A549 (cell line): ENCODE measurements at regions of chr11 and their contacts with region 1.

Region 1: DNA sequence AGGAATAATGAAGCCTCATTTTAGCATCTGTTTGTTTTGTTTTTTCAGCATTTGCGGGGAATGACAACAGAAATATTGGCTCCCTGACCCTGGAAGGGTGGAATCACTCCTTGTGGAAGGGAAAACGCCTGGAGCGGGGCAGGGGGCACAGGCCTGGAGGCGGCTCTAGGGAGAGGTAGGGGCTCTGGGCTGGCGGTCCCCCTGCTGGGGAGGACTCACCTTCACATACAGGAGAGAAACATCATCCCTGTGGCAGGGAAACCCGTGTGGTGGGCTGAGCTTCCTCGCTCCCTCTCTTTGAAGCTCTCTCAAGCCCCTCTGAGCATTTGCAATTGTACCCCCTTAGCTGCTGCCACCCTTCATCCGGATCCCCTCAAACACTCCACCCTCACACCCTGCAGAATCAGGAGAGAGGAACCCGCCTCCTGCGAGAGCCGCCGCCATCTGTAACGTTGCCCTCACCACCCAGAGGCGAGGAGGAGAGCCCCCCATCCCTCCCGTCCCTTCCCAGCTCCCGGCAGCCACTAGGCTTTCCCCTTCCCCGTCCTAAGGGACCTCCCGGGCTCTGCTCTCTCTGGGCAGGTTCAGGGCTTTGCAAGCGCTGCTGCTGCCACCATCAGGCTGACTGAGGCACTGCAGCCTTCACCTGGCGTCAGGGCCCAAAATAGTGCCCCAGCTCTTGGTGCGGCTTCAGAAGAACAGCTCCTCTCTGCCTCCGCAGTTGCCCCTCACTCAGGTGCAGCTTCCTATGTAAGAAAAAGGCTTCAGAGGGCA is 10.4 kb downstream of the KIRREL3 start:
- DNase-seq: peak; percentile 69 to 70
- ATAC-seq: peak; percentile 59 to 76
- H3K4me3 ChIP-seq: no peak overlapping the region
- H3K27ac ChIP-seq: peak overlapping the region; percentile 88 to 92
- H3K4me1 ChIP-seq: peaks cover 56% of the 10 kb centered on the region
- CTCF ChIP-seq: peak; percentile 71
- EP300 ChIP-seq: no peak
- POLR2A ChIP-seq: no peak
- RAD21 ChIP-seq: peak; percentile 90 to 91

Region 2: DNA sequence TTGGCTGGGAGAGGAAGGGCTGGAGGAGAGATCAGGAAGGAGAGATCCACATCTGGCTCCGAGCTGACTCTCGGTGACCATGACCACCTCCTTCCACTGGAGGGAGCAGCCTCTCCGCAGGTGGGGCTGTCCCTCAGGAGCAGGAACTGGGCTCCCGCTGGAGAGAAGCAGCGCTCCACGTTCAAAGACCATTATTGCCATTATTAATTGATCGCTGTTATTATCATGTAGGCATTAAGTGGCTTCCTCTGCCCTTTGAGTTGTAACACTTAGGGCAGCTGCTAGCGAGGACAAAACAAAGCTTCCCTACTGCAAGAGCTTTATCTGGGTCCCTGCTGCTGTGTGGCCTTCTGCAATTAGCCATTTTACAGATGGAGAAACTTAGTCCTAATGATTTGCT is 382.8 kb before region 1 on chr11:
- CTCF ChIA-PET with region 1: interaction called, 78 read pairs
- POLR2A ChIA-PET with region 1: no interaction called
- DNase-seq: peak; percentile 44 to 59
- ATAC-seq: peak; percentile 98
- H3K4me3 ChIP-seq: no peak overlapping the region
- H3K27ac ChIP-seq: peak overlapping the region in 1 of 2 experiments; percentile 52; a peak in 2 of 6 replicates
- H3K4me1 ChIP-seq: 0 out of 3 replicates have a peak, but pooled peaks cover 4% of the 10 kb centered on the region
- CTCF ChIP-seq: peak; percentile 72
- EP300 ChIP-seq: no peak
- POLR2A ChIP-seq: no peak
- RAD21 ChIP-seq: peak; percentile 84 to 88

Region 3: GRCh38 chr11:126716456-126717083 is 273.6 kb before region 1 on chr11:
- CTCF ChIA-PET with region 1: interaction called, 21 read pairs
- POLR2A ChIA-PET with region 1: no interaction called
- DNase-seq: peak; percentile 21 to 40
- ATAC-seq: peak; percentile 49 to 81; a peak in 3 of 6 replicates
- H3K4me3 ChIP-seq: no peak overlapping the region
- H3K27ac ChIP-seq: no peak overlapping the region
- H3K4me1 ChIP-seq: peaks cover 34% of the 10 kb centered on the region
- CTCF ChIP-seq: peak; percentile 42
- EP300 ChIP-seq: no peak
- POLR2A ChIP-seq: no peak
- RAD21 ChIP-seq: peak; percentile 55 to 67

Region 4: GRCh38 chr11:126973060-126973459 is 17.1 kb before region 1 on chr11:
- CTCF ChIA-PET with region 1: interaction called, 47 read pairs
- POLR2A ChIA-PET with region 1: no interaction called
- DNase-seq: no peak
- ATAC-seq: no peak
- H3K4me3 ChIP-seq: no peak overlapping the region
- H3K27ac ChIP-seq: no peak overlapping the region
- H3K4me1 ChIP-seq: peaks cover 4% of the 10 kb centered on the region; the same call in 1 of the 3 replicates
- CTCF ChIP-seq: no peak
- EP300 ChIP-seq: no peak
- POLR2A ChIP-seq: no peak
- RAD21 ChIP-seq: no peak

Region 5: GRCh38 chr11:126978911-126979310 is 11.2 kb before region 1 on chr11:
- CTCF ChIA-PET with region 1: interaction called, 47 read pairs
- POLR2A ChIA-PET with region 1: no interaction called
- DNase-seq: no peak
- ATAC-seq: no peak
- H3K4me3 ChIP-seq: no peak overlapping the region
- H3K27ac ChIP-seq: no peak overlapping the region
- H3K4me1 ChIP-seq: no peaks in the 10 kb centered on the region
- CTCF ChIP-seq: no peak
- EP300 ChIP-seq: no peak
- POLR2A ChIP-seq: no peak
- RAD21 ChIP-seq: no peak

Region 6: GRCh38 chr11:127003260-127003981 is 13.3 kb after region 1 on chr11:
- CTCF ChIA-PET with region 1: interaction called, 39 read pairs
- POLR2A ChIA-PET with region 1: no interaction called
- DNase-seq: peak; percentile 65 to 69
- ATAC-seq: peak; percentile 89 to 92
- H3K4me3 ChIP-seq: peak overlapping the region; percentile 41
- H3K27ac ChIP-seq: peak overlapping the region; percentile 67 to 92
- H3K4me1 ChIP-seq: peaks cover 22% of the 10 kb centered on the region
- CTCF ChIP-seq: peak; percentile 73
- EP300 ChIP-seq: no peak
- POLR2A ChIP-seq: no peak
- RAD21 ChIP-seq: peak; percentile 44 to 67

Region 7: GRCh38 chr11:127042445-127042844 is 52.3 kb after region 1 on chr11:
- CTCF ChIA-PET with region 1: no interaction called
- POLR2A ChIA-PET with region 1: no interaction called
- DNase-seq: no peak
- ATAC-seq: no peak
- H3K4me3 ChIP-seq: no peak overlapping the region
- H3K27ac ChIP-seq: no peak overlapping the region
- H3K4me1 ChIP-seq: peaks cover 8% of the 10 kb centered on the region; the same call in 2 of the 3 replicates
- CTCF ChIP-seq: no peak
- EP300 ChIP-seq: no peak
- POLR2A ChIP-seq: no peak
- RAD21 ChIP-seq: no peak

Region 8: GRCh38 chr11:127074151-127074761 is 84.1 kb after region 1 on chr11:
- CTCF ChIA-PET with region 1: interaction called, 24 read pairs
- POLR2A ChIA-PET with region 1: no interaction called
- DNase-seq: peak; percentile 45 to 77
- ATAC-seq: peak; percentile 97 to 99
- H3K4me3 ChIP-seq: no peak overlapping the region
- H3K27ac ChIP-seq: no peak overlapping the region
- H3K4me1 ChIP-seq: peaks cover 8% of the 10 kb centered on the region
- CTCF ChIP-seq: peak; percentile 64
- EP300 ChIP-seq: no peak
- POLR2A ChIP-seq: no peak
- RAD21 ChIP-seq: peak; percentile 90 to 92